ENCODE measurements at regions of chr4 and their contacts with region 1.

Region 1: DNA sequence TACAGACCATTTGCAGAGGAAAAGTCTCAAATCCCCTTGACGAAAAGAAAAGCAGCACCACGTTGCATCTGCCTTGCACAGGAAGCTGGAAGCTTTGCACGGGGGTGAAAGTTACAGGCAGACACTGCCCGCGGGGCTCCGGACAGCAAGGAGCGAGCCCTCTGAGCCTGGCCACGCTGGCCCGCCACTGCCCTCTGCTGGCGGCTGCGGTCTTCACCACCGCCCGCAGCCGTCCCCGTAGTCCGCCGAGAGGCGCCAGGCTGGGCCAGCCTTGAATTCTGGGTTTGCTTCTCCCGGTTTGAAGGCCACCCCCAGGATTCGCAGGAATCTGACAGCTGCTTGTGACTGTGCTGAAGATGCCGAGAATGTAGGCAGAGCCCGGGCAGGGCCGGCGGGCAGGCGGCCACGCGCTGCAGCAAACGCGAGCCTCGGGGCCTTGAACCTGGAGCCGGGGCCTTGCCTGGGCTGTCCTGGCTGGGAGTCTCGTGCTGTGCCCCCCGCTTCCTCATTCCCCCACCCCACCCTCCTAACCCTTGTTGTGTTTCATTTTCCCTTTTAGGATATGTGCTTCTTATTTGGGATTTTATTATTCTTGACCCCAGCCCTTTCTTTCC is 49.2 kb downstream of the ENPP6 start:
- DNase-seq: peak; percentile 87

Region 2: DNA sequence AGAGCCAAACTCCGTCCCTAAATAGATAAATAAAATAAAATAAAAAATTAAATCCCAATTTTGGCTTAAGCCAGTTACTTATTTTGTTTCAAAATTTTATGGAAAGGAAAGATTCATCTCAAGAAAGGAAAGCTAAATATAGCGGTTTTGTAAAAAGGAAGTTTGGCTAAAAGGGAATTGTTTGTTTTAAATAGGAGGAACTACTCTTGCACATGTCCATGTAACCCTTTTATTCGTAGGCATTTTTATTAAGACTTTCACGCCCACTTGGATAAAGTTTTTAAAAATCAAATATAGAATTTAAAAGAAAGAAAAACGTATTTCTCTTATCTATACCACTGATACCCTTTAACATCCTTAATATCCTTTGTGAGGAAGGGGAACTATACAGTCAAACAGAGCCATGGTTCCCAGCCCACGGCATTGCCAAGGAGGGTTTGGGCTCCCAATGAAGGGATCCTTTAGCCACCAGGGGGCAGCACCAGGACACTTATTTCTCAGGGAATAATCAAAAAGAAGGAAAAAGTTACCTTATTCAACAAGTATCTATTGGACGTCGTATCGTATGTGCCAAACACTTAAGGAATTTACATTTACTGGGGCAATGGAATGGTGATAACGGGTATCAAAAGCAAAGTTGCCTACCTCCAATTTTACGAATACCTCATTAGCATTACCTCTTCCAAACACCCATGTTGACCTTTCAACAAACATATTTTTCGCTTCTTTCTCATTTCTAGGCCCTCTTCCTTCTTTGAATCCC is 696.4 kb before region 1 on chr4:
- intact Hi-C with region 1: loop called (anchors 10 kb)
- DNase-seq: peak; percentile 84

Region 3: GRCh38 chr4:183722731-183723560 is 445.6 kb before region 1 on chr4:
- intact Hi-C with region 1: loop called (anchors 10 kb)
- DNase-seq: peak; percentile 84

Region 4: GRCh38 chr4:183950536-183950935 is 218.0 kb before region 1 on chr4:
- intact Hi-C with region 1: no loop called
- DNase-seq: no peak

Region 5: DNA sequence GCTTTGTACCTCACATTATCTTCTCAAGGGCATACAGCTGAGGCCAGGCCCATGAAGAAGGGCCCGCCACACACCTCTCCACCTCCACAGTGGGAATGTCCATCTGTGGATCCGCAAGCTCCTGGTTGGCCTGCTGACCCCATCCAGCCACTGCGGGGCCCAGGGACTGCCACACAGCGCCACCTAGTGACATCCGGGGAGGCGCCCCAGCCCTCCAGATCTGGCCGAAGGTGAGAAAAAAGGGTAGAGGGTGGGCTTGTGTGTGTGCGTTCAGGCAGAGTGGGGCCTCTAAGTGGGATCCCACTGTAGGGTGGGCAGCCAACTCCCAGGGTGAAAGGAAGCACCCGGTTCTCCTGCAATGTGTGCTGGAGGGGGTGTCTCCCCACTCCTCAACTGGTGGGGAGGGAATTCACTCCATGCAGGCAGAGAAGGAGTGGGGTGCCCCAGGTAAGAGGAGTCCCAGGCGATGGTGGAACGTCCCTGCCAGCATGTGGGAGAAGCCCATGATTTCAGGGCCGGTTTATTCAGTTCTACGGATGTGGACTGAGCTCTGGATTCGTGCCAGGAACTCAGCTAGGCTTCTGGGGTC is 68.1 kb before region 1 on chr4:
- intact Hi-C with region 1: loop called (anchors 5 kb)
- DNase-seq: no peak

Region 6: GRCh38 chr4:184111233-184111832 is 57.2 kb before region 1 on chr4:
- intact Hi-C with region 1: no loop called
- DNase-seq: no peak

Measured in cardiac septum (tissue), 1 donor.